ENCODE measurements at regions of chr10 and their contacts with region 1.

Region 1: DNA sequence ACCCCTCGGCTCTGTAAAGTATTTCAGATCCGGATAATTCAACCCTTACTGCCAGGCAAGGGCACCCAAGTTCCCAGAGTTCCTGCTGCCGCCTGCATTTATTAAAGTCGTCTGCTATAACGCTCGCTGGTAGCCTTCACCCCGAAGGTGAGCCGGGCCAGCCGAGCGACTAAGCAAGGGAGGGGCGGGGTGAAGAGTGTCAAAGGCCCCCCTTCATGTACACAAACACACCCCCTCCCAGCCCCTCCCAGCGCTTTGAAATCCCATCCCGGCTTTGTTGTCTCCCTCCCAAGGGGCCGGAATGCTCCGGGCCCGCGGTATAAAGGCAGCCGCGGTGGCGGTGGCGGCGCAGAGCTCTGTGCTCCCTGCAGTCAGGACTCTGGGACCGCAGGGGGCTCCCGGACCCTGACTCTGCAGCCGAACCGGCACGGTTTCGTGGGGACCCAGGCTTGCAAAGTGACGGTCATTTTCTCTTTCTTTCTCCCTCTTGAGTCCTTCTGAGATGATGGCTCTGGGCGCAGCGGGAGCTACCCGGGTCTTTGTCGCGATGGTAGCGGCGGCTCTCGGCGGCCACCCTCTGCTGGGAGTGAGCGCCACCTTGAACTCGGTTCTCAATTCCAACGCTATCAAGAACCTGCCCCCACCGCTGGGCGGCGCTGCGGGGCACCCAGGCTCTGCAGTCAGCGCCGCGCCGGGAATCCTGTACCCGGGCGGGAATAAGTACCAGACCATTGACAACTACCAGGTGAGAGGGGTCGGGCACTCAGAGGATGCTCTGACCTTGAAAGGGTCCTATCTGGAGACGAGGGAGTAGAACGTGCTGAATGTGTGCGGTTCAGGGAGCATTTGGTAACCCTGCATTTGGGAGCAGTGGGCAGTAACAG is at the start of gene DKK1:
- DNase-seq: peak; percentile 89
- H3K4me3 ChIP-seq: peak within 1 kb of the TSS; percentile 90 to 98 (median 90)
- H3K27ac ChIP-seq: peak within 1 kb of the TSS; percentile 94
- H3K4me1 ChIP-seq: peaks cover 36% of the 10 kb centered on the region
- H3K27me3 ChIP-seq: no peaks in the 10 kb centered on the region
- CTCF ChIP-seq: peak; percentile 92 to 96
- POLR2A ChIP-seq: peak; percentile 99
- total RNA-seq, gene DKK1: 184 and 200 TPM in 2 replicates

Region 2: GRCh38 chr10:52351914-52352330 is 37.7 kb after region 1 on chr10:
- CTCF ChIA-PET with region 1: interaction called, 3 read pairs
- POLR2A ChIA-PET with region 1: no interaction called
- dilution Hi-C with region 1: no loop called
- intact Hi-C with region 1: loop called (anchors 2 kb)
- DNase-seq: peak; percentile 37
- H3K4me3 ChIP-seq: no peak overlapping the region
- H3K27ac ChIP-seq: peak overlapping the region; percentile 11
- H3K4me1 ChIP-seq: peaks cover 16% of the 10 kb centered on the region
- H3K27me3 ChIP-seq: no peaks in the 10 kb centered on the region
- CTCF ChIP-seq: no peak
- POLR2A ChIP-seq: no peak

Region 3: GRCh38 chr10:52443419-52444388 is 129.5 kb after region 1 on chr10:
- CTCF ChIA-PET with region 1: interaction called, 7 read pairs
- POLR2A ChIA-PET with region 1: interaction called, 4 read pairs
- dilution Hi-C with region 1: no loop called
- intact Hi-C with region 1: loop called (anchors 1 kb)
- DNase-seq: peak; percentile 85
- H3K4me3 ChIP-seq: no peak overlapping the region
- H3K27ac ChIP-seq: peak overlapping the region; percentile 96
- H3K4me1 ChIP-seq: peaks cover 21% of the 10 kb centered on the region
- H3K27me3 ChIP-seq: no peaks in the 10 kb centered on the region
- CTCF ChIP-seq: no peak
- POLR2A ChIP-seq: no peak

Region 4: DNA sequence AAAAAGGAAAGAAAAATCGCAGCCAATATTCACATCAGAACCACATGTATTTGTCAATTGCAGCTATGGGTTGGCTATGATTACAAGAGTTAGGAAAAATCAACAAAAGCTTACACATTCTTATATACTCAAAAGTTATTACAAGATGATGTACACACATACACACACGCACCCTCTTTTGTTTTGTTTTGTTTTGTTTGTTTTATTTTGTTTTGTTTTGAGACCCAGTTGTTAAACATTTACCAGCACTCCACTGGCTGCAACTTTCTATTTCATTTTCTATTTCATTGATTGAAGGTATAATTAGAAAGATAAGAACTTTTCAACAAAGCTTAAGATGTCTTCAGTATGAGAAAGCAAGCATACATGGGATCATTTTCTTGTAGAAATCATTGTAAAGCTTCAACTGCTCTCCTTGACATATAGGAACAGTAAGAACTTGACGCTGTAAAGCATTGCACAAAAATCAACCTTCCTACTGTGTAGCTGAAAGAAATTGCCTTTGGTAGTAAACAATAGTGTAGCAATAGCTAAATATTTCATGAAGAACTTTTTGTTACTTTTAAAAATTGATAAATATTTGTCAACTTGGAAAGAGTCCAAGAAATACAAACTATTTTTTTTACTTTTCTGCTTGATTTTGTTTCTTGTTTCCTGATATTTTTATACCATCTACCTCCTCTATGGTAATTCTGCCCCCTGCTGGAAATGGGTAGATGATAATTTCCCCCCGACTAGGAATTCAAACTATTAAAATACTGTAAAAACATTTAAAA is 252.5 kb after region 1 on chr10:
- CTCF ChIA-PET with region 1: interaction called, 279 read pairs
- POLR2A ChIA-PET with region 1: interaction called, 7 read pairs
- dilution Hi-C with region 1: no loop called
- intact Hi-C with region 1: loop called (anchors 1 kb)
- DNase-seq: peak; percentile 81
- H3K4me3 ChIP-seq: no peak overlapping the region
- H3K27ac ChIP-seq: no peak overlapping the region
- H3K4me1 ChIP-seq: peaks cover 14% of the 10 kb centered on the region
- H3K27me3 ChIP-seq: no peaks in the 10 kb centered on the region
- CTCF ChIP-seq: peak; percentile 18 to 47
- POLR2A ChIP-seq: no peak

Region 5: GRCh38 chr10:52668024-52668423 is 353.8 kb after region 1 on chr10:
- CTCF ChIA-PET with region 1: no interaction called
- POLR2A ChIA-PET with region 1: no interaction called
- dilution Hi-C with region 1: no loop called
- intact Hi-C with region 1: loop called (anchors 5 kb)
- DNase-seq: peak; percentile 86
- H3K4me3 ChIP-seq: no peak overlapping the region
- H3K27ac ChIP-seq: peak overlapping the region; percentile 81
- H3K4me1 ChIP-seq: peaks cover 13% of the 10 kb centered on the region
- H3K27me3 ChIP-seq: no peaks in the 10 kb centered on the region
- CTCF ChIP-seq: no peak
- POLR2A ChIP-seq: no peak